ENCODE measurements at regions of chr10 and their contacts with region 1.

Region 1: GRCh38 chr10:119596537-119597404 is at the start of gene TIAL1:
- DNase-seq: peak; percentile 99
- H3K4me3 Mint-ChIP-seq: peak within 1 kb of the TSS; percentile 77
- H3K27ac Mint-ChIP-seq: peak within 1 kb of the TSS; percentile 87
- H3K4me1 Mint-ChIP-seq: peaks cover 22% of the 10 kb centered on the region
- H3K27me3 Mint-ChIP-seq: no peaks in the 10 kb centered on the region
- CTCF ChIP-seq: no peak
- total RNA-seq, gene TIAL1: 117 and 149 TPM in 2 replicates

Region 2: GRCh38 chr10:119199231-119199992 is 397.4 kb before region 1 on chr10:
- CTCF ChIA-PET with region 1: interaction called, 3 read pairs
- POLR2A ChIA-PET with region 1: interaction called, 10 read pairs
- intact Hi-C with region 1: loop called (anchors 10 kb)
- DNase-seq: peak; percentile 73
- H3K4me3 Mint-ChIP-seq: no peak overlapping the region
- H3K27ac Mint-ChIP-seq: no peak overlapping the region
- H3K4me1 Mint-ChIP-seq: peaks cover 16% of the 10 kb centered on the region
- H3K27me3 Mint-ChIP-seq: no peaks in the 10 kb centered on the region
- CTCF ChIP-seq: peak; percentile 59

Region 3: DNA sequence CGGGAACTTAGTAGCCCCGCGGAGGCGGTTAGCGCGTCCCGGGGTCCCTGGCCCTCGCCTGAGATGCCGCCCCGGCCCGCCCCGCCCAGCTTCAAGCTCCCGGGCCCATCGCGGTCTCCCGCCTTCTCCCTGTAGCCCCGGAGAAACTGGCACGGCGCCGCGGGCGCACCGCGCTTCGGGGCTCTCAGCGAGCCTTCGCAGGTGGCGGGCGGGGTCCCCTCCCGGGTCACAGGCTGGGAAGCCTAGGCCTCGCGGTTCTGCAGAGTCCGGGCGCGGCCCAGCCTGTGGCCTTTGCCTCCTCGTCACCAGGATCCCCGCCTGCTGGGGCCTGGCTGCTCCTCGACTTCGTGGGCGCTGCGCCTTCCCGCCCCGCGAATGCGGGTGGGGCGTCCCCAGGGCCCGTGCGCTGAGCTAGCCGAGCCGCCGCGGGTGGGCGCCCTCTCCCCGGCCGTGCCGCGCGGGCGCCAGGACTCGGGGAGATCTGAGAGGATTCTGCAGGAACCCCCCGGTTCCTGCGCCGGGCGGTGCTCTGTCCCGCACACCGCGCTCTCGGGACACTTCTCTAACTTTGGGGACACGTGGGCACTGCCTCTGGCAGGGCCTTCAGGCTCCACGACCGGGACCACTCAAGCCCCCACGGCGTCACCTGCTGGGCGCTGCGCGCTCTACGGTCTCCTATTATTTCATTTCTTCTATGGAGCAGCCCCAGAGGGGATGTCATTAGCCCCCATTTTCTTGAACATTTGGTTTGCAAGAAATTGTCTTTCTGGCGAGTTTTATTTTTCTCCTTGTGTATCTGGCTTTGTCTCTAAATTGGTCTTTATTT is 53.6 kb before region 1 on chr10:
- CTCF ChIA-PET with region 1: interaction called, 3 read pairs
- POLR2A ChIA-PET with region 1: interaction called, 8 read pairs
- intact Hi-C with region 1: loop called (anchors 5 kb)
- DNase-seq: peak; percentile 51
- H3K4me3 Mint-ChIP-seq: peak overlapping the region; percentile 77
- H3K27ac Mint-ChIP-seq: peak overlapping the region; percentile 62
- H3K4me1 Mint-ChIP-seq: peaks cover 36% of the 10 kb centered on the region
- H3K27me3 Mint-ChIP-seq: no peaks in the 10 kb centered on the region
- CTCF ChIP-seq: peak; percentile 36

Region 4: GRCh38 chr10:119575991-119576390 is 20.8 kb before region 1 on chr10:
- CTCF ChIA-PET with region 1: no interaction called
- POLR2A ChIA-PET with region 1: interaction called, 13 read pairs
- intact Hi-C with region 1: no loop called
- DNase-seq: no peak
- H3K4me3 Mint-ChIP-seq: no peak overlapping the region
- H3K27ac Mint-ChIP-seq: no peak overlapping the region
- H3K4me1 Mint-ChIP-seq: peaks cover 9% of the 10 kb centered on the region
- H3K27me3 Mint-ChIP-seq: no peaks in the 10 kb centered on the region
- CTCF ChIP-seq: no peak

Region 5: GRCh38 chr10:119608316-119609155 is 11.8 kb after region 1 on chr10:
- CTCF ChIA-PET with region 1: interaction called, 20 read pairs
- POLR2A ChIA-PET with region 1: interaction called, 3 read pairs
- intact Hi-C with region 1: no loop called
- DNase-seq: peak; percentile 66
- H3K4me3 Mint-ChIP-seq: no peak overlapping the region
- H3K27ac Mint-ChIP-seq: no peak overlapping the region
- H3K4me1 Mint-ChIP-seq: peaks cover 5% of the 10 kb centered on the region
- H3K27me3 Mint-ChIP-seq: no peaks in the 10 kb centered on the region
- CTCF ChIP-seq: peak; percentile 58

Region 6: DNA sequence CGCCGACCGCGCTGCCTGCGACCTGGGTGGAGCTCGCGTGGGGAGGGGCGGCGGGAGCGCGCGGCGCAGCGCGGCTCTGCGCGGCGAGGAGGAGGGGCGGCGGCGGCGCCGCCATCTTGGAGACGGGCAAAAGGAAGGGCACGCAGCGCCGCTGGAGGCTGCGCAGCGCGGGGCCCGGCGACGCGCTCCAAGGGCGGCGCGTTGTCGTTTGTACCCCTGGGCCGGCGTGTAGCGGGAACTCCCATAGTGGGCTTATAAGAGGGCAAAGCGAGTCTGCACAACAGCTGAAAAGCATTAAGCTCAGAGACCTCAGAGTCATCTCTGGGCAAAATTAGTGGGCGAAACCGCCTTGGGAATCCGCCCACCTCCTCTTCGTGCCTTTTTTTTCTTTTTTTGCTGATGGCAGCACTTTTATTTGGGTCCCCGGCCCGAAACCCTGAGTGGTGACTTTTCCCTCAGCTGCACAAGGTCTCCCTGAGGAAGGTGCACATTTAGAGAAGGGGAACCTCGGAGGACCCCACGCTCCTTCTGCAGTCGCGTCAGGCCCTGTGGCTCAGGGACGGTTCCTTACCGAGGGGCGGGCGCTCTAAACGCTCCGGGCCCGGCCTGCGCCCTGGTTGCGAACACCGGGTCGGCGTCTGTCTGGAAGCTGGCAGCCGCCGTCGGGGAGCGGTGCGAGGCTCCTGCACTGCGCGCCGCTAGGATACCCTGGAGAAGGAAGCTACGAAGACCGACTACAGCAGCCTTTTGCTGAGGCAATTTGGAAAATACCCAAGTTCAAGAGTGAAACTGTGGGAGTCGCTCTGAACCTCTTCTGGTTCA is 276.3 kb after region 1 on chr10:
- CTCF ChIA-PET with region 1: no interaction called
- POLR2A ChIA-PET with region 1: interaction called, 15 read pairs
- intact Hi-C with region 1: no loop called
- DNase-seq: peak; percentile 77
- H3K4me3 Mint-ChIP-seq: peak overlapping the region; percentile 87
- H3K27ac Mint-ChIP-seq: peak overlapping the region; percentile 59
- H3K4me1 Mint-ChIP-seq: peaks cover 28% of the 10 kb centered on the region
- H3K27me3 Mint-ChIP-seq: no peaks in the 10 kb centered on the region
- CTCF ChIP-seq: no peak

Measured in MCF 10A (cell line).